ENCODE measurements at regions of chr12 and their contacts with region 1.

Region 1: DNA sequence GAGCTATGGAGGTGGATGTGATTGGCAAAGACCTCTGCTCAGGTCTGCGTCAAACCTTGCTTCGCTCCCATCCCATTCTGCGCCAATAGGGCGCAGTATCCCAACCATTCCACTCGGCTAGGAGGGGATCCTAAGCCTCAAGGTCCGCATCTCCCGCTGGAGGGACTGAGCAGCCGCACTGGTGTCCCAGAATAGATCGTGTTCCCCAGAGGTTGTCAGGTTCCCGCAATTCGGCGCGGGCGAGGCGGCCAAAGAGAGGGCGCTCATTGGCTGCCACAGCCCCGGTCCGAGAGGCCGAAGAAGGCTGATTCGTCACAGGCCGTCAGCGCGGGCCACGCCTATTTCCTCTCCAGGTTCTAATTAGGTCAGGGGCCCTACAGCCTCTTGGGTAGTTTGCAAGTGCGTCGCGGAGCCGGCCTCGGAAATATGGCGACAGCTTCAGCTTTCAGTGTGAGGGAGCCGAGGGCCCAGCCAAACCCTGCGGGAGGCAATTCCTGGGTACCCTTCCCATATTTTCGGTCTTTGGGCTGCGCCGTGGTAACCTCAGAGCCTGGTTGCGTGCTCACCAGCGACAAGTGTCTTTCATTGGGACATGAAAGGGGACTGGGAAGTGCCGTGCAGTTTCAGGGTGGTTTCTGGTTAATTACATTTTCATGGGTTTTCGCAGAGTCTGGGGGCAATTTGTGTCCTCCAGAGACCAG is 5.0 kb downstream of the OR10AD1 start:
- DNase-seq: peak; percentile 75 to 88 (median 86)
- ATAC-seq: peak; percentile 97
- H3K4me3 ChIP-seq: peak overlapping the region; percentile 89
- H3K4me3 Mint-ChIP-seq: peak overlapping the region; percentile 83 to 96 (median 92)
- H3K27ac ChIP-seq: peak overlapping the region; percentile 98
- H3K27ac Mint-ChIP-seq: peak overlapping the region; percentile 94 to 99 (median 96)
- H3K4me1 ChIP-seq: peaks cover 28% of the 10 kb centered on the region in 2 donors
- H3K4me1 Mint-ChIP-seq: peaks cover 31 to 53% (median 48%) of the 10 kb centered on the region in 7 donors
- H3K27me3 ChIP-seq: no peaks in the 10 kb centered on the region
- H3K27me3 Mint-ChIP-seq: peaks cover 0 to 28% (median 0%) of the 10 kb centered on the region in 5 donors

Region 2: DNA sequence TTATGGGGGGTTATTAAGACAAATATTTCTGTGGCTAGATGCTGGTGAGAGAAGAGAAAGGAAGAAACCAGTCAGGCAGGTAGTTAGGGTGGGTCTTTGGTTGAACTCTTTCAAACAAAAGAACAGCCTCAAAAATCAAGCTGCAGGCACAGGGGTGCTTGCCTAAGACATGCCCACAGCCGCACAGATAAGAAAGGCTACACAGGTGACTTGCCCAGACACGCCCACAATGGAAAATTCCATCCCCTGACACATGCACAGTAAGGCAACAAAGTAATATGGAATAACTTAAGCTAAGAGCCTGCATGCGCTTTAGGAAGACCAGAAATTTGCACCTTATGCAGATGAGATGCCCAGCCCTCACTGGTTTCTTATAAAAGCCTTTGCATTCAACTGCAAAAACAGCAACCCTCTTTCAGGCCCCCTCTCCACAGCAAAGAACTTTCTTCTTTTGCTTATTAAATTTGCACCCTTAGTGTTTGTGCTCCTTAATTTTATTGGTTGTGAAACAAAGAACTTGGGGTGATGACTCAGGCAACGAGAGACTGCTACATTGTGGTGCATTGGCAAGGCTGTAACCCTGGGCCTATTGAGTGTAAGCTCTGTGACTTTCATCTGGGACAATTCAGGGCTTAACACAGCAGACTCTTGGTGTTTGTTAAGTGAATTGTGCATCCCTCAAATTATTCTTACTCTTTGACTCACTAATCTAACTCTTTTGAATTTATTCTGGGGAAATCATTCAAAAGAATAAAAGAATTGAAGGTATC is 641.7 kb before region 1 on chr12:
- CTCF ChIA-PET with region 1: no interaction called
- POLR2A ChIA-PET with region 1: no interaction called
- intact Hi-C with region 1: no loop called
- DNase-seq: no peak
- ATAC-seq: no peak
- H3K4me3 ChIP-seq: no peak overlapping the region
- H3K4me3 Mint-ChIP-seq: no peak overlapping the region
- H3K27ac ChIP-seq: no peak overlapping the region
- H3K27ac Mint-ChIP-seq: peak overlapping the region in 1 of 9 donors; percentile 41
- H3K4me1 ChIP-seq: peaks cover 0 to 6% of the 10 kb centered on the region in 2 donors
- H3K4me1 Mint-ChIP-seq: peaks cover 0 to 13% (median 13%) of the 10 kb centered on the region in 7 donors
- H3K27me3 ChIP-seq: no peaks in the 10 kb centered on the region
- H3K27me3 Mint-ChIP-seq: peaks cover 0 to 3% (median 0%) of the 10 kb centered on the region in 5 donors

Region 3: GRCh38 chr12:48157018-48157888 is 40.9 kb before region 1 on chr12 and contains the start of gene ASB8:
- CTCF ChIA-PET with region 1: no interaction called
- POLR2A ChIA-PET with region 1: interaction called, 56 read pairs
- intact Hi-C with region 1: loop called (anchors 1 kb)
- DNase-seq: peak; percentile 95 to 99 (median 98)
- ATAC-seq: peak; percentile 98
- H3K4me3 ChIP-seq: peak within 1 kb of the TSS; percentile 97
- H3K4me3 Mint-ChIP-seq: peak within 1 kb of the TSS; percentile 90 to 99 (median 97)
- H3K27ac ChIP-seq: peak within 1 kb of the TSS; percentile 84
- H3K27ac Mint-ChIP-seq: peak within 1 kb of the TSS; percentile 95 to 99 (median 99)
- H3K4me1 ChIP-seq: peaks cover 8 to 20% of the 10 kb centered on the region in 2 donors
- H3K4me1 Mint-ChIP-seq: peaks cover 22 to 65% (median 56%) of the 10 kb centered on the region in 7 donors
- H3K27me3 ChIP-seq: no peaks in the 10 kb centered on the region
- H3K27me3 Mint-ChIP-seq: peaks cover 0 to 5% (median 0%) of the 10 kb centered on the region in 5 donors
- total RNA-seq, gene ASB8: 42.9 to 75.9 (median 54.9) TPM

Region 4: DNA sequence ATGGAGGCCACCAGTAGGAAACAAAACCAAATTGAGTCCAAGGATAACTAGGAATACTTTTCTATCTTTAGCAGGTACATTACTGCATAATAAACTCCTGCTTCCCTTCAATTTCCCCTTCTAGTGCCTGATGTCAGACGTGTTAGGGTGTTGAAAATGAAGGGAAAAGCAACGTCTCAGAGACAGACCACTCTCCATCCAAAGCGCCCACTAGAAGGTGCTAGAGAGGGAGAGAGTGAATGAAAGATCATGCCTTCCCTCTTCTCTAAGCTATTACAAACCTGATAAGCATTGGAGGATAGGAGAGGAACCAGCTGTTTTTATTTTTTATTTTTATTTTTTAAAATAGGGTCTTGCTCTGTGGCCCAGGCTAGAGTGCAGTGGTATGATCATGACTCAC is 88.5 kb after region 1 on chr12:
- CTCF ChIA-PET with region 1: interaction called, 6 read pairs
- POLR2A ChIA-PET with region 1: interaction called, 6 read pairs
- intact Hi-C with region 1: loop called in 1 of 2 experiments (anchors 1 kb)
- DNase-seq: no peak
- ATAC-seq: peak; percentile 26
- H3K4me3 ChIP-seq: no peak overlapping the region
- H3K4me3 Mint-ChIP-seq: peak overlapping the region in 6 of 10 donors; percentile 8 to 74 (median 57)
- H3K27ac ChIP-seq: no peak overlapping the region
- H3K27ac Mint-ChIP-seq: peak overlapping the region; percentile 71 to 95 (median 88)
- H3K4me1 ChIP-seq: peaks cover 12 to 14% of the 10 kb centered on the region in 2 donors
- H3K4me1 Mint-ChIP-seq: peaks cover 10 to 23% (median 19%) of the 10 kb centered on the region in 7 donors
- H3K27me3 ChIP-seq: no peaks in the 10 kb centered on the region
- H3K27me3 Mint-ChIP-seq: peaks cover 0 to 12% (median 0%) of the 10 kb centered on the region in 5 donors

Region 5: GRCh38 chr12:48305190-48305589 is 107.1 kb after region 1 on chr12:
- CTCF ChIA-PET with region 1: no interaction called
- POLR2A ChIA-PET with region 1: no interaction called
- intact Hi-C with region 1: no loop called
- DNase-seq: no peak
- ATAC-seq: no peak
- H3K4me3 ChIP-seq: no peak overlapping the region
- H3K4me3 Mint-ChIP-seq: no peak overlapping the region
- H3K27ac ChIP-seq: no peak overlapping the region
- H3K27ac Mint-ChIP-seq: no peak overlapping the region
- H3K4me1 ChIP-seq: no peaks in the 10 kb centered on the region
- H3K4me1 Mint-ChIP-seq: no peaks in the 10 kb centered on the region
- H3K27me3 ChIP-seq: no peaks in the 10 kb centered on the region
- H3K27me3 Mint-ChIP-seq: peaks cover 0 to 3% (median 0%) of the 10 kb centered on the region in 5 donors

Region 6: DNA sequence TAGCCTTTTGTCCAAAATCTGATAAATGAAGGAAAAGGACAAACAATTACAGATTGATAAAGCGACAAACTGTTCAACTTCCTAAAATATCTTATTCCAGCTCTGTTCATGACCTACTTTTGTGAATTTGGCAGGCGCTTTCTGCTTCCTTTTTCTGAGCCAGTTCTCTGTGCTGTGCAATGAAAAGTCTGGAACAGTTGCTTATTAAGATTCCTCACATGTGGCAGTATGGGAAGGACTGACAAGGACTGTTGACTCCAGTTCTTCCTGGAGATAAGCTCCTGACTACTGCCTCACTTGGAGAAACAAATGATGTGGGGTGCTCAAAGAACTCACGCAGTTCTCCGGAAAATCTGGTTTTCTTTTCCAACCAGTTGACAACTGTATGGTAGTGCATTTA is 215.9 kb after region 1 on chr12:
- CTCF ChIA-PET with region 1: no interaction called
- POLR2A ChIA-PET with region 1: interaction called, 13 read pairs
- intact Hi-C with region 1: no loop called
- DNase-seq: no peak
- ATAC-seq: no peak
- H3K4me3 ChIP-seq: no peak overlapping the region
- H3K4me3 Mint-ChIP-seq: no peak overlapping the region
- H3K27ac ChIP-seq: no peak overlapping the region
- H3K27ac Mint-ChIP-seq: no peak overlapping the region
- H3K4me1 ChIP-seq: peaks cover 16 to 17% of the 10 kb centered on the region in 2 donors
- H3K4me1 Mint-ChIP-seq: peaks cover 6 to 22% (median 18%) of the 10 kb centered on the region in 7 donors
- H3K27me3 ChIP-seq: peaks cover 0 to 5% of the 10 kb centered on the region in 2 donors
- H3K27me3 Mint-ChIP-seq: peaks cover 0 to 32% (median 7%) of the 10 kb centered on the region in 5 donors

Region 7: GRCh38 chr12:48681738-48682532 is 483.8 kb after region 1 on chr12 and contains the start of gene KANSL2:
- CTCF ChIA-PET with region 1: no interaction called
- POLR2A ChIA-PET with region 1: interaction called, 4 read pairs
- intact Hi-C with region 1: loop called in 1 of 2 experiments (anchors 2 kb)
- DNase-seq: peak; percentile 79 to 98 (median 96)
- ATAC-seq: peak; percentile 97
- H3K4me3 ChIP-seq: peak within 1 kb of the TSS; percentile 88
- H3K4me3 Mint-ChIP-seq: peak within 1 kb of the TSS; percentile 93 to 99 (median 97)
- H3K27ac ChIP-seq: peak within 1 kb of the TSS; percentile 90
- H3K27ac Mint-ChIP-seq: peak within 1 kb of the TSS; percentile 97 to 99 (median 98)
- H3K4me1 ChIP-seq: peaks cover 30 to 38% of the 10 kb centered on the region in 2 donors
- H3K4me1 Mint-ChIP-seq: peaks cover 32 to 59% (median 53%) of the 10 kb centered on the region in 7 donors
- H3K27me3 ChIP-seq: no peaks in the 10 kb centered on the region
- H3K27me3 Mint-ChIP-seq: no peaks in the 10 kb centered on the region
- total RNA-seq, gene KANSL2: 37.5 to 117 (median 74.4) TPM

Region 8: GRCh38 chr12:48957141-48958048 is 759.3 kb after region 1 on chr12 and contains the start of gene ARF3:
- CTCF ChIA-PET with region 1: no interaction called
- POLR2A ChIA-PET with region 1: no interaction called
- intact Hi-C with region 1: loop called in 1 of 2 experiments (anchors 5 kb)
- DNase-seq: peak; percentile 84 to 92 (median 91)
- ATAC-seq: peak; percentile 96
- H3K4me3 ChIP-seq: peak within 1 kb of the TSS; percentile 86
- H3K4me3 Mint-ChIP-seq: peak within 1 kb of the TSS; percentile 90 to 99 (median 96)
- H3K27ac ChIP-seq: peak within 1 kb of the TSS; percentile 80
- H3K27ac Mint-ChIP-seq: peak within 1 kb of the TSS; percentile 78 to 96 (median 88)
- H3K4me1 ChIP-seq: peaks cover 17 to 22% of the 10 kb centered on the region in 2 donors
- H3K4me1 Mint-ChIP-seq: peaks cover 27 to 55% (median 47%) of the 10 kb centered on the region in 7 donors
- H3K27me3 ChIP-seq: no peaks in the 10 kb centered on the region
- H3K27me3 Mint-ChIP-seq: peaks cover 0 to 29% (median 3%) of the 10 kb centered on the region in 5 donors
- total RNA-seq, gene ARF3: 48.7 to 137 (median 56.1) TPM